ENCODE measurements at regions of chr22 and their contacts with region 1.

Region 1: GRCh38 chr22:40818747-40819598 is at the start of gene SLC25A17:
- DNase-seq: peak; percentile 89
- H3K4me3 Mint-ChIP-seq: peak within 1 kb of the TSS; percentile 94
- H3K27ac Mint-ChIP-seq: peak within 1 kb of the TSS; percentile 83
- H3K4me1 Mint-ChIP-seq: peaks cover 34% of the 10 kb centered on the region
- H3K27me3 Mint-ChIP-seq: no peaks in the 10 kb centered on the region
- total RNA-seq, gene SLC25A17: 23.0 to 24.6 TPM

Region 2: DNA sequence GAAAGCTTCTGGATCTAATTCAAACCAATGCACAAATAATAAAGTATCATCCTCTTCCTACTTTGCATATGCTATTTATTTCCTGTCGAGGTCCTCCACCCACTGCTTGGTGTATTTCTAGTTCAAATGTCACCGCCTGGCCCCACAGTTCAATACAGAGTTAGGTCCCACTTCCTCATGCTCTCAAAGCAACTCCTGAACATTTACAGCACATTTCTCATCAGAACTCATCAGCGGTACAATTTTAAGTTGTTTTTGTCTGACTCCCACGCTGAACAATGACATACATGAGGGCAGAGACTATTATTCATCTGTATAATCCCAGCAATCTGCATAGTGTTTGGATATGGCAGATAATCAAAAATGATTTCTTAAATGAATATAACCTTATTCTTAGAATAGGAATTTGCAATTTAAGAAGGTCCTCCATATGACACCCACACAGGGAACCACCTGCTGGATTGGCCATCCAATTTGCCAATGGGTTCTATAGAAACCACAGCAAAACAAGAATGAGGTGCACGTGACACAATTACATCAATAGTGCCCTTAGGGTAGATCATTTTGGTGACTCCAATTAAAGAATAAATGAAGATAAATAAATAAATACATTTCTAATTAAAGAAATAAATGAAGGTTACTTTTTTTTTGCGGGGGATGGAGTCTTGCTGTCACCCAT is 54.1 kb before region 1 on chr22:
- CTCF ChIA-PET with region 1: no interaction called
- intact Hi-C with region 1: loop called (anchors 2 kb)
- DNase-seq: peak; percentile 48
- H3K4me3 Mint-ChIP-seq: no peak overlapping the region
- H3K27ac Mint-ChIP-seq: peak overlapping the region; percentile 82
- H3K4me1 Mint-ChIP-seq: peaks cover 22% of the 10 kb centered on the region
- H3K27me3 Mint-ChIP-seq: no peaks in the 10 kb centered on the region

Region 3: DNA sequence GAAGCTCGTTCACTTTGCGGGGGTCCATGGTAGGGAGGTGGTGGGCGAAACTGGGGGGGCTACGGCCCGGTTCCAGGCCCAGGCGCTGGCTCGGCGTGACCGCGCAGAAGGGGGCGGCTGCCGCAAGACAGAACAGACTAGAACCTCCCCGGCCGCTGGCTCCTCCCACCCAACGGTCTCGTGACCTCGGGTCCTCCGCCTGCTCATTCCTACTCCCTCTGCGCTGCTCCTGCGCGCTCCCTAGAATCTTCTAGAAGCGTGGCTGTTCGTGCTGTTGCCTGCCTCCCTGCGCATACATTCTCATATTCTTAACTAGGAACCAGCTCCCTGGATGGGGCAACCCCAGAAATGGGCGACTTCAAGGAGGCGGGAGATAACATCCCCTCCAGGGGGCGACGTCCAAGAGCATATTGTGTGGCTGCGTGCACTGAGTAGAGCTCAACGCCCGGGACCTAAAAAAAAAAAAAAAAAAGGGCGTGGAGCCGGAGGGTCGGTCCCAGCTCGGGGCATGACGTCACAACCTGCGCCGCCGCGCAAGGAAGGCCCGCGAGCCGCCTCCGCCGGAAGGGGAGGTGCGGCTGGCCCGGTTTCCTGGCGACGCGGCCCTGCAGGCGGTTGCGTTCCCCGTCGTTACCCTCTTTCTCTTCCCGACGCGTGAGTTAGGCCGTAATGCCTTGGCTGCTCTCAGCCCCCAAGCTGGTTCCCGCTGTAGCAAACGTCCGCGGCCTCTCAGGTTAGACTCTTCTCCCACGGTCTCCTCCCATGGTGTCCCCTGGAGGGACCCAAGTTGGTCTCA is 37.7 kb after region 1 on chr22 and contains the starts of genes ST13 and XPNPEP3:
- CTCF ChIA-PET with region 1: no interaction called
- intact Hi-C with region 1: loop called (anchors 1 kb)
- DNase-seq: peak; percentile 98
- H3K4me3 Mint-ChIP-seq: peak within 1 kb of the TSS; percentile 95
- H3K27ac Mint-ChIP-seq: peak within 1 kb of the TSS; percentile 99
- H3K4me1 Mint-ChIP-seq: peaks cover 51% of the 10 kb centered on the region
- H3K27me3 Mint-ChIP-seq: no peaks in the 10 kb centered on the region
- total RNA-seq, gene ST13: 240 to 254 TPM
- total RNA-seq, gene XPNPEP3: 15.7 to 19.6 TPM

Measured in activated naive CD4-positive, alpha-beta T cell treated with anti-CD3 and anti-CD28 coated beads for 36 hours (primary cell).